Activated CD4-positive, alpha-beta T cell treated with anti-CD3 and anti-CD28 coated beads, Interleukin-2, amount 10 ng/mL, durations not matched to agents 7 days and 5 days (primary cell): ENCODE measurements at regions of chr5 and their contacts with region 1.

Region 1: GRCh38 chr5:134864707-134865106 is 9.5 kb upstream of the TXNDC15 start:
- DNase-seq: no peak
- H3K4me3 Mint-ChIP-seq: no peak overlapping the region
- H3K27ac Mint-ChIP-seq: no peak overlapping the region
- H3K4me1 Mint-ChIP-seq: no peaks in the 10 kb centered on the region
- H3K27me3 Mint-ChIP-seq: no peaks in the 10 kb centered on the region

Region 2: DNA sequence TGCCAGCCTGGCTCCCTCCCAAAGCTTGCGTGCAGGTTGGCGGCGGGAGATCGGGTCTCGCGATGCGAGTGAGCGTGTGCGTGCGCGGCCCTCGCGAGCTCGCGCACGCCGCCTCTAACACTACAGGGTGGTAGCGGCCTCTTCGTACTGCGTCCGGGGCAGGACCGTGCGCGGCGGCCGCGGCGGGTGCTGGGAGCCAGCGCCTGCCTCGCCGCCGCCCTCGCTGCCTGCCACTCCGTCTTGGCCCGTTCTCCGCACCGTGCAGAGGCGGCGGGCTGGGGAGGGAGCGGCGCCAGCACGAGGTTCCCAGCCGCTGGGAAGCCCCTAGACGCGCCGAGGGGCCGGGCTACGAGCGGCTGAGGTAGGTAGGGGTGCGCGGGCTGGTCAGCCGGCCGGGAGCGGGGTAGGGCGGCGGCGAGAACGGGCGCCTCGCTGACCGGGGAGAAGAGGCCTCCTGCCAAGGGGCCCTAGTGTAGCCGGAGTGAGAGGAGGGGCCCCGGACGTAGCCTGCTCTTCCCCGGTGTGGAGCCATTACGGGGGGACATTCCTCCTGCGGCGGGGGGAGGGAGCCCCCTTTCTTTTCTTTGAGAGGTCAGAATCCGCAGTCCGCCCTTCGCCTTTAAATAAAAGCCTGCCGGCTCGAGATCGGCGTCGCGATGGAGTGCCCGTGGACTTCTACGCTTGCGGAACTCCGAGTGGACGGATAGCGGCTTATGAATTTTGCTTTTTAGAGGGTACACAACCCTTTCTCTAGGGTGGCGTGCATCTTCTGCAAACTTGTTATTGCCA is 18.7 kb before region 1 on chr5 and contains the start of gene C5orf24:
- CTCF ChIA-PET with region 1: interaction called, 24 read pairs
- POLR2A ChIA-PET with region 1: no interaction called
- DNase-seq: peak; percentile 95
- H3K4me3 Mint-ChIP-seq: peak within 1 kb of the TSS; percentile 93
- H3K27ac Mint-ChIP-seq: peak within 1 kb of the TSS; percentile 99
- H3K4me1 Mint-ChIP-seq: peaks cover 38% of the 10 kb centered on the region
- H3K27me3 Mint-ChIP-seq: no peaks in the 10 kb centered on the region
- total RNA-seq, gene C5orf24: 30.1 to 33.0 TPM